Heart right ventricle (tissue), 16 donors: ENCODE measurements at regions of chr5 and their contacts with region 1.

Region 1: DNA sequence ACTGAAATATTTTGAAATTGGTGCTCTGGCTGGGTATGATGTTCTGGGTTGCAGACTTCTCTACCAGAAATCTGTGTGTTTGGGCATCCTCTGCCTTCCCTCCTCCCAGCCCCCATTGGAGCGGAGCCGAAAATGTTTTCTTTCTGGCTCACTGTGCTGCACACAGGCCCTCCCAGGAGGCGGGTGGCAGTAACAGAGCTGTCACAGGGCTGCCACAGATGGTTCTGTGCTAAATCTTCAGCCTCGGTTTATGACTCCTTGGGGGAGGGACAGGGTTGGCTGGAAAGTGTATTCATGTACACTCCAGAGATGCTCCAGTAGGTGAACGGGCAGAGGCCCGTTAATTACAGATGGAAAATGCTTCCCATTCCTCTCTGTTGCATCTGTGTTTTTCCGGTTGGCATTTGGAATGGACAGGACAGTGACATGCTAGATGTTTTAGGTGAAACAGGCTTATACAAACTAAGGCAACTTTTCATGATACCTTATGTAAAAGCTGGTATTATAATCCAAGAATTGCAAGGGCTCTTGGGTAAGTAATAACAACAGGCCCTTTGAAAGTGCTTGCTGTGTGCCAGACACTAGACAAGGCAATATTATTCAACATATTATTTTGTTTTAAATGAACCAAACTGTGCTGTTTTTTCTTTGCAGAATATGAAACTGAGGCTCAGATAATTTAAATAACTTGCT is 180.2 kb downstream of the ADCY2 start:
- DNase-seq: no peak
- ATAC-seq: no peak
- H3K4me3 ChIP-seq: no peak overlapping the region
- H3K27ac ChIP-seq: no peak overlapping the region
- H3K4me1 ChIP-seq: no peaks in the 10 kb centered on the region
- H3K27me3 ChIP-seq: no peaks in the 10 kb centered on the region
- CTCF ChIP-seq: no peak

Region 2: DNA sequence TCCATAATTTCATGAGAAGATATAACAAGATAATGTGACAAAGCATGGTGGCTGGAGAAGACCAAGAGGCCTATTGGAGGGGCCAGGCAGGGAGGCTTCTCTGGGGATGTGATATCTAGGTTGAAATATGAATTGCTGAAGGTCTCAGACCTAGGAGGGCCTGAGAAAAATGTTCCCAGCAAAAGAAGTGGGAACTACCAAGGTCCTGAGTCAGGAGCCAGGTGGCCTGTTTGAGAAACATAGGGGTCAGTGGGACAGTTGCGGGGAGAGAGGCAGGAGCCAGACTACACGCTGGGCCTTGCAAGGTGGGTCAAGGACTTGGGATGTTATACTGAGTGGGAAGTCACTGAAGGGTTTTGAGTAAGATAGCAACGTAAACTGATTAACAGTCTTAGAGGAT is 58.7 kb after region 1 on chr5:
- intact Hi-C with region 1: loop called in 1 of 10 experiments (anchors 2 kb)
- DNase-seq: no peak
- ATAC-seq: no peak
- H3K4me3 ChIP-seq: no peak overlapping the region
- H3K27ac ChIP-seq: no peak overlapping the region
- H3K4me1 ChIP-seq: no peaks in the 10 kb centered on the region
- H3K27me3 ChIP-seq: no peaks in the 10 kb centered on the region
- CTCF ChIP-seq: no peak